Gastrocnemius medialis (tissue), 4 donors: ENCODE measurements at regions of chrX and their contacts with region 1.

Region 1: GRCh38 chrX:39149761-39150160 is 348.5 kb downstream of the MID1IP1 start:
- DNase-seq: peak; percentile 27 to 63
- ATAC-seq: peak; percentile 65 to 88
- H3K4me3 ChIP-seq: no peak overlapping the region
- H3K27ac ChIP-seq: no peak overlapping the region
- H3K4me1 ChIP-seq: peaks cover 4 to 11% of the 10 kb centered on the region in 2 donors
- H3K27me3 ChIP-seq: no peaks in the 10 kb centered on the region
- CTCF ChIP-seq: peak; percentile 34 to 70 (median 67)
- POLR2A ChIP-seq: no peak

Region 2: DNA sequence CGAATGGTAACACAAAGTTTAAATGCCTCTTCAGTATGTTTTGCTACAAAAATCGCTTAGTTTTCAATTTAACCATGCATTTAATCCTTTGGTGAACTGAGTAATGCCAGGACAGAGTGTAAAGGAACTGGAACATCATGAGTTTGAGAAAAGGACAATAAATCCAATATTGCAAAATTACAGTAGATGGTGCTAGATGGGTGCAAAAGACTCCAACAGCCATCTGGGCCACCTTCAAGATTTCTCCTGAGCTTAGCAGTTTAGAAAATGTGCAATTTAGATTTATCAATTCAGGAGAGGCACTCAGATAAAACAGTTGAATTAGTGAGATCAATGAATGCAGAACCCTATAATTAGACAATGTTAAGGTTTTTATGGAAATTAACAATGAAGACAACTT is 381.7 kb before region 1 on chrX:
- in situ Hi-C with region 1: loop called in 2 of 4 experiments (anchors 10 to 25 kb)
- intact Hi-C with region 1: no loop called
- DNase-seq: no peak
- ATAC-seq: peak in 1 of 2 donors; percentile 60
- H3K4me3 ChIP-seq: no peak overlapping the region
- H3K27ac ChIP-seq: no peak overlapping the region
- H3K4me1 ChIP-seq: no peaks in the 10 kb centered on the region
- H3K27me3 ChIP-seq: no peaks in the 10 kb centered on the region
- CTCF ChIP-seq: peak in 2 of 5 experiments; percentile 23 to 38
- POLR2A ChIP-seq: no peak

Region 3: GRCh38 chrX:38985375-38985774 is 164.4 kb before region 1 on chrX:
- in situ Hi-C with region 1: loop called in 1 of 4 experiments (anchors 10 kb)
- intact Hi-C with region 1: loop called (anchors 5 kb)
- DNase-seq: no peak
- ATAC-seq: peak in 1 of 2 donors; percentile 53
- H3K4me3 ChIP-seq: no peak overlapping the region
- H3K27ac ChIP-seq: no peak overlapping the region
- H3K4me1 ChIP-seq: no peaks in the 10 kb centered on the region
- H3K27me3 ChIP-seq: no peaks in the 10 kb centered on the region
- CTCF ChIP-seq: peak in 2 of 5 experiments; percentile 11 to 19
- POLR2A ChIP-seq: no peak

Region 4: GRCh38 chrX:39065051-39065871 is 84.5 kb before region 1 on chrX:
- in situ Hi-C with region 1: no loop called
- intact Hi-C with region 1: loop called (anchors 5 kb)
- DNase-seq: peak; percentile 46 to 52
- ATAC-seq: peak; percentile 78 to 80
- H3K4me3 ChIP-seq: no peak overlapping the region
- H3K27ac ChIP-seq: peak overlapping the region; percentile 27 to 83 (median 70)
- H3K4me1 ChIP-seq: peaks cover 0 to 15% of the 10 kb centered on the region in 2 donors
- H3K27me3 ChIP-seq: no peaks in the 10 kb centered on the region
- CTCF ChIP-seq: no peak
- POLR2A ChIP-seq: no peak

Region 5: DNA sequence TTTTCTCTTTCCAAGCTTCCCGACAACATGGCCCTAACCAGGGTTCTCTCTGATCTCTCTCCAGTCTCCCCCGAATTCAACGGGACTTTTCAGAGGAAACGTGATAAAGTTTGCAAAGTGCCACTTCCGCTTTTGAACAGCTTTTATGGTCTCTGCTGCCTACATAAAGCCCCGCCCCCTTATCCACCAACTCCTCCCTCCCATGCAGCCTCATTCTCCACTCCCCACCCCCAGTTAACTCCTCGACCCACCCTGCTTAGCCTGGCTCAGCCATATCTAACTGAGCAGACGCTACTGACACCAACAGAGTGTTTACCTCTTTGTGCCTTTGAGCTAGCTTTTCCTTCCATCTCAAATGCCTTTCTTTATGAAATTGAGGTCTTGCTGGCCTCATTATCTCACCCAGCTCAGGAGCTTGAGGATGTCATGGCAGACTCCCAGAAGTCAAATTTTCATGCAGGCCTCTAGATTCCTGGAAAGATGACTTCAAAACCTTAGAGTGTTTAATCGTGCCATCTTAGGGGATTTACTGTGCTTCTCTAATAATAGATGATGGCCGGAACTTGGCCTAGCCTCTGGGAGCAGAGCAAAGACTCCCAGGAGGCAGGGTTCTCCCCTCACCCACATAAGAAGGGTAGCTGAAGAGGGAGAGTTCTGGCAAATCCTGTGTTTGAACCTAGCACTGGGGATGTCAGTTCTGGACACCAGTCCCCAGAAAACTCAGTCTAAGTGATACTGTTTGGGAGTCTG is 342.0 kb after region 1 on chrX:
- in situ Hi-C with region 1: no loop called
- intact Hi-C with region 1: no loop called
- DNase-seq: no peak
- ATAC-seq: peak in 1 of 2 donors; percentile 73
- H3K4me3 ChIP-seq: no peak overlapping the region
- H3K27ac ChIP-seq: no peak overlapping the region
- H3K4me1 ChIP-seq: peaks cover 4 to 12% of the 10 kb centered on the region in 2 donors
- H3K27me3 ChIP-seq: no peaks in the 10 kb centered on the region
- CTCF ChIP-seq: no peak
- POLR2A ChIP-seq: no peak